Activated CD4-positive, alpha-beta T cell treated with anti-CD3 and anti-CD28 coated beads, Interleukin-2, amount 10 ng/mL, durations not matched to agents 24 days and 14 days (primary cell): ENCODE measurements at regions of chr9 and their contacts with region 1.

Region 1: GRCh38 chr9:21031091-21031807 is at the start of gene HACD4:
- DNase-seq: peak; percentile 92
- H3K4me3 Mint-ChIP-seq: peak within 1 kb of the TSS; percentile 69
- H3K27ac Mint-ChIP-seq: peak within 1 kb of the TSS; percentile 78
- H3K4me1 Mint-ChIP-seq: peaks cover 11% of the 10 kb centered on the region
- H3K27me3 Mint-ChIP-seq: peaks cover 3% of the 10 kb centered on the region
- total RNA-seq, gene HACD4: 2.8 and 3.0 TPM in 2 replicates

Region 2: DNA sequence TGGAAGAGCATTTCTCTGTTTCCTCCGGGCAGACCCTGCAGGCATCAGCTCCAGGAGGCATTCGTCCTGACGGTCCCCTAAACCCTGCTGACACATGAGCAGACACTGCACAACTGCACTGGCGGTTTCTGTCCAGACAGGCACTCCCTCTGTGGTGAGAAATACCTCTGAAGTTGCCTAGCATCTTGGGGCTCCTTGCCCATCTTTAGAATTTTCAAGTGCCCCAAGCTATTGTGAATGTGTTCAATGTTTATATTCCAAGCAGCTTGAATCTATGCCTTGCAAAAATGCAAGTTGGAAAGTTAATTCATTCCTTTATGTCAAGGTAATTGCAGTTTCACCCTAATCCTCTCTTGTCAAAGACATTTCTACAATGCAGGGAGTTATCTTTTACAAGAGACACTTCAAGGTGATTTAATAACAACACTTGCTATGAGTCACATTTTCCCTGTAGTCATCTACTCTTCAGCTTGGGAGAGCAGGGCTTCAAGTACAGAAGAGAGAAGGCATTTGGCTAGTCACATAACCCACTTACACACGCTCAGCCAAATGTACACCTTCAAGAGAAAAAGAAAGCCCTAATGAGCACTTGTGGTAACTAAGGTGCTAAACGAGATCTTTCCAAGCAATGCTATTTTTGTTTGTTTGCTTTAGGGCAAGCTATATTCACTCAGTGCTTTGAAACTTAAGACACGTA is 711.5 kb before region 1 on chr9:
- intact Hi-C with region 1: loop called (anchors 2 kb)
- DNase-seq: peak; percentile 80
- H3K4me3 Mint-ChIP-seq: peak overlapping the region; percentile 60
- H3K27ac Mint-ChIP-seq: peak overlapping the region; percentile 94
- H3K4me1 Mint-ChIP-seq: peaks cover 78% of the 10 kb centered on the region
- H3K27me3 Mint-ChIP-seq: no peaks in the 10 kb centered on the region

Region 3: DNA sequence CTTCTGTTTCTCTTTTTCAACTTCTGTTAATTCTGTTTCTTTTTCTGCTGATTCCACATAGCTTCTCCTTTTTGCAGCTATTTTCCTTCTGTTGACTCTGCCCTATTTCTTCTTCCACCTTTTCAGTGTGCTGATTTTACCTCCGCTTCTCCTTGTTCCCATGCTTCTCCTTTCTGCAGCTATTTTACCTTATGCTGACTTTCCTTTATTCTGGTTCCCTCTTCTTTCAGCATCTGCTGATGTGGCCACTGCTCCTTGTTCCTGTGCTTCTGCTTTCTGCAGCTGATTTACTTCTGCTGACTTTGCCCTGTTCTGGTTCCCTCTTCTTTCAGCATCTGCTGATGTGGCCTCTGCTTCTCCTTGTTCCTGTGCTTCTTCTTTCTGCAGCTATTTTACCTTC is 58.6 kb before region 1 on chr9:
- intact Hi-C with region 1: no loop called
- DNase-seq: no peak
- H3K4me3 Mint-ChIP-seq: no peak overlapping the region
- H3K27ac Mint-ChIP-seq: no peak overlapping the region
- H3K4me1 Mint-ChIP-seq: no peaks in the 10 kb centered on the region
- H3K27me3 Mint-ChIP-seq: no peaks in the 10 kb centered on the region

Region 4: DNA sequence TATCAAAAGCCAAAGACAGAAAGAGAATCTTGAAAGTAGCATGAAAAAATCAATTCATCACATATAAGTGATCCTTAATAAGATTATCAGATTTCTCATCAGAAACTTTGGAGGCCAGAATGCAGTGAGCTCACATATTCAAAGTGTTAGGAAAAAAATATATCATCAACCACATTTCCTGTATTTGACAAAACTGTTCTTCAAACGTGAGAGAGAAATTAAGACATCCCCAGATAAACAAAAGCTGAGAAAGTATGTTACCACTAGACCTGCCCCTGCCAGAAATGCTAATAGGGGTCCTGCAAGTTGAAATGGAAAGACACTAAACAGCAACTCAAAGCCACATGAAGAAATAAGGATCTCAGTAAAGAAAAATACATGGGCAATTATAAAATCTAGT is 29.7 kb before region 1 on chr9:
- intact Hi-C with region 1: loop called (anchors 1 kb)
- DNase-seq: no peak
- H3K4me3 Mint-ChIP-seq: peak overlapping the region; percentile 14
- H3K27ac Mint-ChIP-seq: peak overlapping the region; percentile 12
- H3K4me1 Mint-ChIP-seq: peaks cover 22% of the 10 kb centered on the region
- H3K27me3 Mint-ChIP-seq: no peaks in the 10 kb centered on the region

Region 5: GRCh38 chr9:21016701-21017491 is 14.4 kb before region 1 on chr9:
- intact Hi-C with region 1: no loop called
- DNase-seq: no peak
- H3K4me3 Mint-ChIP-seq: no peak overlapping the region
- H3K27ac Mint-ChIP-seq: no peak overlapping the region
- H3K4me1 Mint-ChIP-seq: no peaks in the 10 kb centered on the region
- H3K27me3 Mint-ChIP-seq: no peaks in the 10 kb centered on the region

Region 6: GRCh38 chr9:21047281-21047691 is 16.0 kb after region 1 on chr9:
- intact Hi-C with region 1: no loop called
- DNase-seq: no peak
- H3K4me3 Mint-ChIP-seq: no peak overlapping the region
- H3K27ac Mint-ChIP-seq: no peak overlapping the region
- H3K4me1 Mint-ChIP-seq: peaks cover 5% of the 10 kb centered on the region
- H3K27me3 Mint-ChIP-seq: peaks cover 5% of the 10 kb centered on the region

Region 7: GRCh38 chr9:21078717-21079116 is 47.5 kb after region 1 on chr9:
- intact Hi-C with region 1: loop called (anchors 5 kb)
- DNase-seq: no peak
- H3K4me3 Mint-ChIP-seq: no peak overlapping the region
- H3K27ac Mint-ChIP-seq: no peak overlapping the region
- H3K4me1 Mint-ChIP-seq: peaks cover 27% of the 10 kb centered on the region
- H3K27me3 Mint-ChIP-seq: peaks cover 15% of the 10 kb centered on the region

Region 8: DNA sequence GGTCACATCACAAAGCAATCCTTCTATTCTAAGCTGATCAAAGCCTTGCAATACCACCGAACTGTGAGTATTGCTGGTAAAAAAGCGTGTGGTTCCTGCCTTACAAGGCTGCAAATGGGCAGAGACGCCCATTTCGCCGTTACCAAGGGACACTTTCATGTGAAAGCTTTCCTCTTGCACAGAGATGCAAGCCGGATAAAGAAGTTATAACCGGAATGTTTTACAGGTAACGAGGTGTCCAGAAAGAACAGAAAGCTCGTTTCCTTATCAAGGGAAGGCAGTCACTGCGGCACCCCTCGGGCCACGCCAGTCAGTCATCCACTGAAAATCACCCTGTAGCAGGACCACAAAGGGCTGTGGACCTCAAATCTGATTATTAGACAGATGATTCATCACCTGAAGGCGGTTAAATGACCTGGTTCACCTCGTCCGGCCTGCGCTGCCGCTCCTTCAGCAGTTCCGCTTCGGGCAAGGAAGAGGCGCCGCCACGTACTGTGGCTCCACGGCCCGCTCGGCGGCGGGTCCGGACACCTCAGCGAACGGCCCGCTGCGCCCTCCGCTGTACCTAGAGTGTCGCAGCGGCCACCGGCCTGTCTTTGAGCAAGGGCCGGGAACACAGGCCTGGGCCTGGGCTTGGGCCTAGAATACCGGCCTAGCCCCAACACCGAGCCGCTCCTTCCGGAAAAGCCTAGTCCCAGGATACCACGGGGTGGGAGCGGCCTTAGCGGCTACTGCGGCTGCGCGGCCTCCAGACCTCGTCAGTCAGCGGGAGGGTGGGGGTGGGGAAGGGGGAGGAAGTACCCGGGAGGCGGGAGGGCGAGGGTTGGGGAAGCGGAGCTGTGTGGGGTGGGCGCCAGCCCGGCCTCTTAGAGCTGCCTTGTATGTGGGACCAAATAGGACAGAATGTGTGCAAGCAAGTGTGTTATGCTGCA is 303.7 kb after region 1 on chr9 and contains the start of gene KLHL9:
- intact Hi-C with region 1: loop called (anchors 2 kb)
- DNase-seq: peak; percentile 94
- H3K4me3 Mint-ChIP-seq: peak within 1 kb of the TSS; percentile 92
- H3K27ac Mint-ChIP-seq: peak within 1 kb of the TSS; percentile 90
- H3K4me1 Mint-ChIP-seq: peaks cover 33% of the 10 kb centered on the region
- H3K27me3 Mint-ChIP-seq: peaks cover 15% of the 10 kb centered on the region
- total RNA-seq, gene KLHL9: 14.8 and 15.0 TPM in 2 replicates

Region 9: DNA sequence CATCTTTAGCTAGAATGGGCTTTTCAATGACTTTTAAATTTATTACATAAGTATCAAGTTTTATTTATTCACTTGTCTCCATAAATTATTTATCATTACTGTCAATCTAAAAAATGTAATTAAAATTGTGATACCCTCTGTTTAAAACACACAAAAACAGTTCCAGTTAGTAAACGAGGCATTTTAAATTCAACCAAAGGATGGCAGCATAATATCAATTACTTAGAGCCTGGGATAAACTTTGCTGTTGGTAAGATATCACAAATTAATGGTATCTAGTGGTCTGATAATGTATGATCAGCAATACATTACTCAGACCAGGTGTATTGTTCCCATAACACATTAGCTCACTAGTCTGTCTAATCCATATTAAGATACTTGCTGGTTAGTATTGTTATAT is 460.5 kb after region 1 on chr9:
- intact Hi-C with region 1: no loop called
- DNase-seq: no peak
- H3K4me3 Mint-ChIP-seq: no peak overlapping the region
- H3K27ac Mint-ChIP-seq: no peak overlapping the region
- H3K4me1 Mint-ChIP-seq: no peaks in the 10 kb centered on the region
- H3K27me3 Mint-ChIP-seq: peaks cover 2% of the 10 kb centered on the region